Psoas muscle (tissue), 8 donors: ENCODE measurements at regions of chr16 and their contacts with region 1.

Region 1: GRCh38 chr16:28974437-28975157 is at the start of gene SPNS1:
- DNase-seq: peak; percentile 98 to 99
- ATAC-seq: peak; percentile 98 to 99 (median 99)
- H3K4me3 ChIP-seq: peak within 1 kb of the TSS; percentile 99
- H3K27ac ChIP-seq: peak within 1 kb of the TSS; percentile 79
- H3K4me1 ChIP-seq: peaks cover 12% of the 10 kb centered on the region
- H3K27me3 ChIP-seq: no peaks in the 10 kb centered on the region
- CTCF ChIP-seq: no peak
- total RNA-seq, gene SPNS1: 12.9 to 20.3 (median 16.1) TPM

Region 2: GRCh38 chr16:27461483-27462171 is 1513.0 kb before region 1 on chr16:
- intact Hi-C with region 1: loop called in 1 of 2 experiments (anchors 10 kb)
- DNase-seq: peak in 1 of 2 donors; percentile 66
- ATAC-seq: peak; percentile 44 to 65 (median 56)
- H3K4me3 ChIP-seq: no peak overlapping the region
- H3K27ac ChIP-seq: peak overlapping the region; percentile 78
- H3K4me1 ChIP-seq: peaks cover 25% of the 10 kb centered on the region
- H3K27me3 ChIP-seq: no peaks in the 10 kb centered on the region
- CTCF ChIP-seq: no peak

Region 3: GRCh38 chr16:28923702-28924398 is 50.7 kb before region 1 on chr16:
- intact Hi-C with region 1: no loop called
- DNase-seq: no peak
- ATAC-seq: no peak
- H3K4me3 ChIP-seq: peak overlapping the region; percentile 84
- H3K27ac ChIP-seq: peak overlapping the region; percentile 95
- H3K4me1 ChIP-seq: peaks cover 4% of the 10 kb centered on the region
- H3K27me3 ChIP-seq: no peaks in the 10 kb centered on the region
- CTCF ChIP-seq: no peak

Region 4: DNA sequence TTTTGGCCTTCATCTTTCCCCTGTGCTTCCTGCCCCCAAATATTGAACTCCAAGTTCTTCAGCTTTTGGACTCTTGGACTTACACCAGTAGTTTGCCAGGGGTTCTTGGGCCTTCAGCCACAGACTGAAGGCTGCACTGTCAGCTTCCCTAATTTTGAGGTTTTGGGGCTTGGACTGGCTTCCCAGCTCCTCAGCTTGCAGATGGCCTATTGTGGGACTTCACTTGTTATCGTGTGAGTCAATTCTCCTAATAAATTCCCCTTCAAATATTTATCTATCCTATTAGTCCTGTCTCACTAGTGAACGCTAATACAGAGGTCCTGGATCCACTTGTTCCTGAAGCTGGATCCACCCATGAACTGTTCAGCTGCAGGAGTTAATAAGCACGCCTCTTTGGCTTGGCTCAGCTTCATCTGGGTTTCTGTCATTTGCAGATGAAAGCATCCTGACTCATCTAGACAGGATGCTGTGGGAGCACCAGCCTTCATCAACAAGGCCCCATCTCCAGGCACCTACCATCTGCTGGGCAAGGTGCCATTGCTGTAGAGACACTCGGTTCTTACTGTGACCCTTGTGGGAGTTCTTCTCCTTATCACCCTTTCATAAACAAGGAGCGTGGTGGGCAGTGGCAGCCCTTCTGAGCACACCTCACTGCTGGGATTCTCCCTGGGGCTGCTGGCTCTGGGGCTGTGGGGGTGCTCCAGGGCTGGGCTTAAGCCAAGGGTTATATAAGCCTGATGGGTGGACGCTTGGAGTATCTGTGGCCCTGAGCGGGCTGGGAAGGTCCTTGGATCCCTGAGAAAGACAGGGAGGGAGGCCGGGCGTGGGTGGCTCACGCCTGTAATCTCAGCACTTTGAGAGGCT is 33.4 kb after region 1 on chr16:
- intact Hi-C with region 1: no loop called
- DNase-seq: no peak
- ATAC-seq: no peak
- H3K4me3 ChIP-seq: no peak overlapping the region
- H3K27ac ChIP-seq: no peak overlapping the region
- H3K4me1 ChIP-seq: no peaks in the 10 kb centered on the region
- H3K27me3 ChIP-seq: no peaks in the 10 kb centered on the region
- CTCF ChIP-seq: no peak

Region 5: DNA sequence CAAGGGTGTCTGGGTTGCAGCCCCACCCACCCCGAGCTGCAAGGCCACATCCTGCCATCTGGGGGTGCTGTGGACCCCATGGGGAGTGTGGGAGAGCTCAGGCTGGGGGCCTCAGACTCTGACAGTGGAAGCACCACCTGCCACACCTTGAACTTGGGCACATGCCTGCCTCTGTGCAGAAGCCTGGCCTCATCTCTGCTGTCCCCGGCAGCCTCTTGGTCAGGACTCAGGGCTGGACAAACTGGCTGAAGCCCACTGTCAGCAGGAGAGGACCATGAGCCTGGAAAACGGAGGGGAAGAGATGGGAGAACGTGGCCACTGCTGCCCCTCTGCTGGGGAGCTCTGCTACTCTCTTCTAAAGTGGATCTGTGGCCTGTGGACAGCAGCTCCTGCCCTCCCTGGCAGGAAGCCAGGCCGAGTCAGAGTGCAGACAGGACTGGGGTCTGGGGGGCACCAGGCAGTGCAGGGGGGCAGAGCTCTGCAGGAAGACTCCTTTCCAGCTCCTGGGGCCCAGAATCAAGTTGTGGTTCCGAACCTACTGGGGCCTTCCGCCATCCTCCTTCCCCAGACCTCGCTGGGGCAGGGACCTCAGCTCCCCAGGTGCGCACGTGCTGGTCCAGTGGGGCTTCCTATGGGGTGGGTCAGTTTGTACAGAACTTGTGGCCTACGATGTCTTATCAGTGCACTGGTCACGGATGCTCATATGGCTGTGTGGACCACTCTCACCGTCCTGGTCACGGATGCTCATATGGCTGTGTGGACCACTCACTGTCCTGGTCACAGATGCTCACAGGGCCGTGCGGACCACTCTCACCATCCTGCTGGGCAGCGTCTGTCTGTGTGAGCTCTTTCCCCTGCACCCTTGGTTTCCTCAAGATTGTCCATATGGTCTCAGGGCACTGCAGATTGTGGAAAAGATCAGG is 218.0 kb after region 1 on chr16:
- intact Hi-C with region 1: no loop called
- DNase-seq: no peak
- ATAC-seq: no peak
- H3K4me3 ChIP-seq: no peak overlapping the region
- H3K27ac ChIP-seq: no peak overlapping the region
- H3K4me1 ChIP-seq: no peaks in the 10 kb centered on the region
- H3K27me3 ChIP-seq: no peaks in the 10 kb centered on the region
- CTCF ChIP-seq: no peak

Region 6: DNA sequence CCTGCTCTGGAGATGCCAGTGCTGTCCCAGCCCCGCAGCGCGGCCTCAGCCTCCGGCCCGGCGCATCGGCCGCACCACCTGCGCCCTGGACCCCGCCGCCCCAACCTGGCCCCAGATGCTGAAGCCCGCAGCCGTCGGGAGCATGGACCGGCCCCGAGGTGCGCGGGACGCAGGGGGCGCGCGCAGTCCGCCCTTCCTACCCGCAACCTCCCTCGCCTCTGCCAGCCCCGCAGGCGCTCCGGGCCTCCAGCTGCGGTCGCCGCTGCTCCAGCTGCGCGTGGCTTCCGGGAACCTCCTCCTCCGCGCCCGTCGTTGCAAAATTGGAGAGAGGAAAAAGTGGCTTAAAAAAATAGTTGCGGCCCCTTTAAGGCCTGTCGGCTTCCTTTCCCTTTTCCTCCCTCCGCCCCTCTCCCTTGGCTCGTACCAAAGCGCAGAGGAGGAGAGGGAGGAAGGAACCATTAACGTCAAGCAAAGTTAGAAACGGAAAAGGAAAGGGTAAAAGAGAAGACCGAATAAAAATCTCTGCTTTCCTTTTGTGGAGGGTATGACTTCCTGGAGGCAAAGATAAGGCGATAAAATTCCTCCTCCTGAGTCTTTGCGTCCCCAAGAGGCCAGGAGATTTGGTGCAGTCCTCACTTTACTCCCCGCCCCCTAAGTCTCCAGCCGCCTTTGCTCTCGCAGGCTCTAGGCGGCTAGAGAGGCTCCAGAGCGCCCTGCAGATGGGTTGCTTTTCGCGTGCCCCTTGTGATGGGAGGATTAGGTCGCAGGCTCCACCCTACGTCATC is 888.5 kb after region 1 on chr16 and contains the start of gene CDIPT:
- intact Hi-C with region 1: no loop called
- DNase-seq: peak; percentile 95 to 97
- ATAC-seq: peak; percentile 98 to 99 (median 99)
- H3K4me3 ChIP-seq: peak within 1 kb of the TSS; percentile 95
- H3K27ac ChIP-seq: peak within 1 kb of the TSS; percentile 85
- H3K4me1 ChIP-seq: peaks cover 10% of the 10 kb centered on the region
- H3K27me3 ChIP-seq: no peaks in the 10 kb centered on the region
- CTCF ChIP-seq: peak; percentile 39
- total RNA-seq, gene CDIPT: 24.7 to 36.4 (median 32.3) TPM